Head of caudate nucleus (tissue), 42 donors: ENCODE measurements at regions of chr16 and their contacts with region 1.

Region 1: GRCh38 chr16:69396187-69397061 is 10.6 kb upstream of the TERF2 start:
- DNase-seq: peak in 41 of 42 donors; percentile 30 to 93 (median 74)

Region 2: GRCh38 chr16:69465083-69465721 is 68.8 kb after region 1 on chr16:
- intact Hi-C with region 1: no loop called
- DNase-seq: peak in 6 of 42 donors; percentile 12 to 35 (median 23)

Region 3: GRCh38 chr16:69754469-69755310 is 358.3 kb after region 1 on chr16 and contains the start of gene NOB1:
- intact Hi-C with region 1: loop called (anchors 5 kb)
- DNase-seq: peak; percentile 89 to 99 (median 96)